ENCODE measurements at regions of chr10 and their contacts with region 1.

Region 1: DNA sequence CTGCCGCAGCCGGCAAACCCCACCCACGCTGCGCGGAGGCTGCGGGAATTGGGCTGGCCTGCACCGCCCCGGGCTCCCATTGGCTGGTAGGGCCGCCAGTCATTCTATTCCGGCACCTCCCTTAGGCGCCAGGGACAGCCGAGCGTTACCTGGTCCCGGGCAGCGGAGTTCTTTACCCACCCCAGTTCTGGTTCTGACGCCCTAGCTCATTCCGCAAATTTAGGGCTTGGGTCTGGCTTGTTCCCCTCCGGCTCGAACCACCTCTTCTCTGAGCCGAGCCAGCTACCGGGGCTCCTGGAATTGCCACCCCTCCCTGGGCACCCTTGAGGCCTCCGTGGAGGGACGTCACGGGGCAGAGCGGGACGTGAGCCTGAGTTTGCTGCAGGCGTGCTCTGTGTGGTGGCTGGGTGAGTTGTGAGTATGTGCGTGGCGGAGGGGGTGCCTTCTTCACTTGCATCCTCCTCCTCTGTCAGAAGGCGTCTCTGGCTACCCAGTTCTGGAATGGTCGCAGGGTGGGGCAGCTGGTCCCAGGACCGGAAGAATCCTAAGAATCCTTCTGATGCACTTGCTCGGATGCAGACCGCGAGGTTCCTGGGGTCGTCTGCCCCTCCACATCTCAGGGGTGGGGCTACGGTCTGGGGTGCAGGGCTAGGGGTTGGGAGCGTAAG is at the starts of genes PDZD7 and SFXN3:
- DNase-seq: peak; percentile 96 to 98
- ATAC-seq: peak; percentile 76 to 91 (median 85)
- H3K4me3 ChIP-seq: peak within 1 kb of the TSS; percentile 50
- H3K4me3 Mint-ChIP-seq: peak within 1 kb of the TSS; percentile 88
- H3K27ac ChIP-seq: peak within 1 kb of the TSS; percentile 98
- H3K27ac Mint-ChIP-seq: peak within 1 kb of the TSS; percentile 83 to 89
- H3K4me1 ChIP-seq: peaks cover 28% of the 10 kb centered on the region
- H3K4me1 Mint-ChIP-seq: peaks cover 27 to 28% of the 10 kb centered on the region in 2 donors
- H3K27me3 ChIP-seq: no peaks in the 10 kb centered on the region
- H3K27me3 Mint-ChIP-seq: peaks cover 0 to 7% of the 10 kb centered on the region in 2 donors
- CTCF ChIP-seq: no peak
- total RNA-seq, gene PDZD7: 0.35 to 1.2 (median 0.52) TPM
- total RNA-seq, gene SFXN3: 59.7 to 74.5 (median 68.9) TPM

Region 2: GRCh38 chr10:101042667-101043355 is 11.5 kb after region 1 on chr10:
- intact Hi-C with region 1: no loop called
- DNase-seq: peak; percentile 76 to 88
- ATAC-seq: peak; percentile 84
- H3K4me3 ChIP-seq: peak overlapping the region; percentile 73
- H3K4me3 Mint-ChIP-seq: peak overlapping the region; percentile 95
- H3K27ac ChIP-seq: peak overlapping the region; percentile 64
- H3K27ac Mint-ChIP-seq: peak overlapping the region; percentile 89 to 97
- H3K4me1 ChIP-seq: peaks cover 18% of the 10 kb centered on the region
- H3K4me1 Mint-ChIP-seq: peaks cover 25 to 29% of the 10 kb centered on the region in 2 donors
- H3K27me3 ChIP-seq: peaks cover 12% of the 10 kb centered on the region
- H3K27me3 Mint-ChIP-seq: peaks cover 15 to 17% of the 10 kb centered on the region in 2 donors
- CTCF ChIP-seq: no peak

Region 3: DNA sequence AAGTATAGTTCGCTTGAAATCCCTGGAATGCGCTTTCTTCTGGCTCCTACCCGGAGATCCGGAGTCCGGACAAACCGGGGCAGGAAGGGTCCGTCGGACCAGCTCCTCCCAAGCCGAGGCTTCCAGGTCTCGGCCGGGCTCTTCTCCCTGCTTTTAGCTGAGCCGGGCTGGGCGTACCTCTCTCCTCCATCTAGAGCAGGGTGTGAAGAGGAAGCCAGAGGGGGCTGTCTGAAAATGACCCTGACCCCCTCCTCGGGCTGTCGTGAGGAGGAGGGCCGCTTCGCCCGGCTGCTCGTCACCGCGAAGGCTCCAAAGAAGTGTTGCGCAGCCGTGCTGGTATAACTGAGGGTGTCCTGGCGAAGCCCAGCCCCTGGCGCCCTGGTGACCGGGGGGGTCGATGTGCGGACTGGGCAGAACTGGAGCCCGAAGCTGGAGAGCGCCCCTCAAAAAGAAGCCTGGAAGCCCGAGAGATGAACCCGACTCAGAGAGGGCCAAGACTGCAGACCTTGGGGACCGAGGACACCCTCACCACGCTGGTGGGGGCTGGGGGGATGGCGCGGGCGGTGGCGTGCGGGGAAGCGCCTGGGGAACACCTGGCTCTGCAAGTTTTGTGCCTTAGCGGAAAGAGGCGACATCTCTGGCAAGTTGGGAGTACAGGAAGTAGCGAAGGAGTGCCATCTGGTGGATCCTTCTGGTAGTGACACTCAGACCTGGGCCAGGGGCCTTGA is 36.3 kb after region 1 on chr10:
- intact Hi-C with region 1: loop called (anchors 5 kb)
- DNase-seq: peak; percentile 64 to 89
- ATAC-seq: peak; percentile 73 to 85 (median 79)
- H3K4me3 ChIP-seq: peak overlapping the region; percentile 43
- H3K4me3 Mint-ChIP-seq: peak overlapping the region; percentile 88
- H3K27ac ChIP-seq: no peak overlapping the region
- H3K27ac Mint-ChIP-seq: peak overlapping the region in 1 of 2 donors; percentile 17
- H3K4me1 ChIP-seq: peaks cover 43% of the 10 kb centered on the region
- H3K4me1 Mint-ChIP-seq: peaks cover 5 to 33% of the 10 kb centered on the region in 2 donors
- H3K27me3 ChIP-seq: peaks cover 41% of the 10 kb centered on the region
- H3K27me3 Mint-ChIP-seq: peaks cover 40 to 45% of the 10 kb centered on the region in 2 donors
- CTCF ChIP-seq: peak; percentile 92

Region 4: DNA sequence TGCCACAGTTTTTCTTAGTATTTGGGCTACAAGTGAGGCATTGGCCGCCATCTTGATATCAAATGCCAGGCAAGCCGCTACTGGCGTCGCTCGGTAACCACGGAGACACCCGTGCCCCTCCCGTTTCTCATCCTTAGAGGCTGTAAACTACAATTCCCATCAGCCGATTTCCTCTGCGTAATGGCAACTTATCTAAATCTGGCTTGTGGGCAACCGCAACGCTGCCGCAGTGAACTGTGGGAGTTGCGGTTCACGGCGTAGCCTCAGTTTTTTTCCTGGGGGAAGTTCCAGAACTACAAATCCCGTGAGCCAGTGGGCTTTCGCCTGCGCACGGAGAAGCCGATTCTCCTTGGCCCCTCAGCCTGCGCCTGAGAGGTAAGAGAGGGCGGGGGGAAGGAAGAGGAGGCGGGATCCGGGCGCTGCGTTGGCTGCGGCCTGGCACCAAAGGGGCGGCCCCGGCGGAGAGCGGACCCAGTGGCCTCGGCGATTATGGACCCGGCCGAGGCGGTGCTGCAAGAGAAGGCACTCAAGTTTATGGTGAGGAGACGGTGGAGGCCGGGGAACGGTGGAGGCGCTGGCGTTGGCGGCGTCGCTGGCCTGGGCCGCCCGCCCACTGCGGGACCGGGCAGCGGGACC is 322.5 kb after region 1 on chr10 and contains the start of gene BTRC:
- intact Hi-C with region 1: loop called (anchors 5 kb)
- DNase-seq: peak; percentile 94 to 99
- ATAC-seq: peak; percentile 91 to 96 (median 95)
- H3K4me3 ChIP-seq: peak within 1 kb of the TSS; percentile 55
- H3K4me3 Mint-ChIP-seq: peak within 1 kb of the TSS; percentile 98
- H3K27ac ChIP-seq: peak within 1 kb of the TSS; percentile 19
- H3K27ac Mint-ChIP-seq: peak within 1 kb of the TSS; percentile 88 to 97
- H3K4me1 ChIP-seq: peaks cover 10% of the 10 kb centered on the region
- H3K4me1 Mint-ChIP-seq: peaks cover 20 to 28% of the 10 kb centered on the region in 2 donors
- H3K27me3 ChIP-seq: no peaks in the 10 kb centered on the region
- H3K27me3 Mint-ChIP-seq: peaks cover 5 to 11% of the 10 kb centered on the region in 2 donors
- CTCF ChIP-seq: no peak
- total RNA-seq, gene BTRC: 13.5 to 22.8 (median 15.2) TPM